Aorta (tissue), 5 donors: ENCODE measurements at regions of chr16 and their contacts with region 1.

Region 1: DNA sequence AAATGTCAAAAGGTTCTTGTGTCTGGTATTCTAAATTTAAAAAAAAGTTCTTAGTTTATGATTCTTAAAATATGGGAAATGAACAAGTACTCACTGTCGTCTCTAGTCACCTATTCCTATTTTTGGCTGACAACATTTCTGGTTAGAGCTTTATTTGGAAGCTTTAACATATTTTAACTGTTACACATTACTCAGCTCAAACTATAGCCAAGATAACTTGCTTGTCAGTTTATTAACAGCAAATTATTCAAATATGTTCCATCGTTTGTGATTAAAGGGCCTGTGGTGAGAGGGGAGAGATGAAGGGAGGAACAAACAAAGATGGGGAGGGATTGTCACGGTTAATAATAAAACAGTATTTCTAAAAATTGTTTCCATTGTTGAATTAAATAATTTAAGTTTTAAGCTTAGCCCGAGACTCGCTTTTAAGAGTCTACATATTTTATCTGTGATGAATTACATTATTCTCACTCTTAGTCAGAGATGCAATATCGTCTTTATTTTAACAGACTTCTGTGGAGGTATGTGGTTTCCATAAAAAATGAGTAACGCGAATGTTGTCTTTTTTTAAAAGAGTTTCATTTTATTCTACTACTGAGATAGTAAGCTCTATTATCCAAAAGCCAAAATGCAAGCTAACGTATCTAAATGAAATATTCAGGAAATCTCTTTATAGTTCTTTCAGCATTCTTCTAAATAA is 321.9 kb upstream of the PMFBP1 start:
- DNase-seq: no peak
- ATAC-seq: no peak
- H3K4me3 ChIP-seq: no peak overlapping the region
- H3K27ac ChIP-seq: no peak overlapping the region
- H3K4me1 ChIP-seq: no peaks in the 10 kb centered on the region
- H3K27me3 ChIP-seq: no peaks in the 10 kb centered on the region

Region 2: DNA sequence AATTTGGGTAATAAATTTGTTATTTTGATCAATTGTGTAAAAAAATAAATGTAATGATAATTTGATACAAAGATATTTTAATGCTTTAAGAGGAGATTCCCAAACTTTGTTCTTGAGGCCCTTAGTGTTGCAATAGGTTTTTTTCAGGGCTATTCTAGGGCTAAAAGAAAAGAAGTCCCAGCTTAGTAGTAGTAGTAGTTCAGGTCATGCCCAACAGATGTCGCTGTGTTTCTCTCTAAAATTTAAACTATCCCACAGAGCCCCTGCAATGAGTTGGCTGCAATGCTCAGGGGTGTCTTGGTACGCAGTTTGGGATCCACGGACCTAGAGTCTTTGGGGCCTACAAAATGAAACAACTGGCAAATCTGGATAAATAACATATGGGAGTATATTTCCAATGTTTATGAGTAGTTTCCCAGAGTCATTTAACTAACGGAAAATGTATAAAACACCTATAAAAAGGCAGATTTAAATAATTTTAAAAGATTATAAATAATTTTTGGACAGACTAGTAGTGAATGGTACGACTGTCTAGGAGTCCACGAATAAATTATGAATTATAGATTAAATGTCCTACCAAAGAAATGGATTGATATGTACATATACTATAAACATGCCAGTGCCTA is 93.5 kb before region 1 on chr16:
- intact Hi-C with region 1: no loop called
- DNase-seq: no peak
- ATAC-seq: peak; percentile 71
- H3K4me3 ChIP-seq: no peak overlapping the region
- H3K27ac ChIP-seq: no peak overlapping the region
- H3K4me1 ChIP-seq: no peaks in the 10 kb centered on the region
- H3K27me3 ChIP-seq: no peaks in the 10 kb centered on the region

Region 3: GRCh38 chr16:73196670-73197069 is 702.8 kb after region 1 on chr16:
- intact Hi-C with region 1: loop called in 1 of 2 experiments (anchors 10 kb)
- DNase-seq: peak; percentile 77 to 85
- ATAC-seq: peak; percentile 89
- H3K4me3 ChIP-seq: no peak overlapping the region
- H3K27ac ChIP-seq: no peak overlapping the region
- H3K4me1 ChIP-seq: no peaks in the 10 kb centered on the region
- H3K27me3 ChIP-seq: no peaks in the 10 kb centered on the region